ENCODE measurements at regions of chr1 and their contacts with region 1.

Region 1: DNA sequence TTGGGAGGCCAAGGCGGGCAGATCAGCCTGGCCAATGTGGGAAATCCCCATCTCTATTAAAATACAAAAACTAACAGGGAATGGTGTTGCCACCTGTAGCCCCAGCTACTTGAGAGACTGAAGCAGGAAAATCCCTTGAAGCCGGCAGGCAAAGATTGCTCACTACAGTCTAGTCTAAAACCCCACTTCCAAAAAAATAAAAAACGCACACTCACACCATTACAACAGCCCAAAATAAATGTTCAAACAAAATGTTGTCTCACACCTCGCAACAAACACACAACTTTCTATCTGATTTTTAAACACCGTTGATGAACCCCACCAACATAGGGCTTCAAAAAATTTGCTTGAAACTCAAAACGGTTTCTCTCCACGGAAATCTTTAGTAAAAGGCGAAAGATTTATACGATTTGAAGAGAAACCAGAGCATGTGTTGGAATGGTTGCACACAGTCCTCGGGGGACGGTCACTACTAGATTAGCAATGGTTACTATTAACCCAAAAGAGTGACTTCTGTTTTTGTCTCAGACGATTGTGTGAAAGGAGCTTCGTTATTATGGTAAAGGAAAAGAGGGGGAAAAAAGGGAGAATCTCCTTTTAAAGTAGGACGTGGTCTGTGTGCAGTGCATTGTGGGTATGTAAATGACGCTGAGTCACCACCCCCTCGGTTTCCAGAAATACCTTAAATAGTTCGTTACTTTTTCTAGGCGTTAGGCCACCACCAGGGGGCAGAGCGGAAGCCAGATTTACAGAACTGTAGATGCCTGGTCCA is at the start of gene RNU5D-1:
- DNase-seq: peak; percentile 96 to 98 (median 98)
- H3K4me3 ChIP-seq: peak within 1 kb of the TSS in 4 of 7 experiments; percentile 12 to 65 (median 48)
- H3K27ac ChIP-seq: peak within 1 kb of the TSS; percentile 99 to 100
- H3K4me1 ChIP-seq: peaks cover 8 to 42% (median 26%) of the 10 kb centered on the region in 4 experiments
- H3K27me3 ChIP-seq: no peaks in the 10 kb centered on the region

Region 2: DNA sequence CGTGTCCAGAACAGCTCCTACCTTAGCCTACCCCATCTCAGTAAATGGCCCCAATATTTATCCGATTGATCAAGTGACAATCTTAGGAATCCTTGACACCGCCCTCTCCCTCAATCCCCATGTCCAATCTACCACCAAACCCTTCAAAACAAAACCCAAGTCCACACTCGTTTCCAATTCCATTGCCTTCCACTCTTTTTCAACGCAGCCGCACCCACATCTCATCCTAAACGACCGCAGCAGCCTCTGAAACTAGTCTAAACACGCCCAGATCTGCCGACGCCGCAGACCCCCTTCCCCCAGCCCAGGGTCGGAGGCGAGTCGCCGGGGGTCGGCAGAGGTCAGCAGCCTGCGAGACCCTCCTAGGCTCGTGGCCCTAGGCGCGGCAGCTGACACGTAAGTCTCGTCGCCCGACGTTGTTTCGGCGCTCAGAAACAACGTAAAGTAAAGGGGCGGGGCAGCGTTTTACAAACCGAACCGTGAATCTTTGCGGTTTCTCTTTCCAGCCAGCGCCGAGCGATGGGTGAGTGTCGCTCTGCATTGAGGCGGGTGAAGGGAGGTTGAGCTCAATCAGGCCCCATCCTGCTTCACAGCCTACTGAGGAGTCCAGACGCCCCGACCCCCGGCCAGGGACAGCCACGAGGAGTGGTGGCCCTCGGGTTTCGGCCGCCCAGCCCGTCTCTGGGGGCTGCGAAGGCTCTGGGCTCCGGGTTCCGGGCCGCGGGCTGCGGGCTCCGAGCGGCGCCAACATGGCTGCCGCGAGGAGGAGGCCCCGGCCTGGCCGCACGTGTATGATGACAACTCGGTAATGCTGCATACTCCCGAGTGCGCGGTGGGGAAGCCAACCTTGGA is 44.4 kb after region 1 on chr1 and contains the start of gene RPS8:
- CTCF ChIA-PET with region 1: interaction called, 6 read pairs
- POLR2A ChIA-PET with region 1: interaction called, 20 read pairs
- DNase-seq: peak; percentile 94 to 96 (median 95)
- H3K4me3 ChIP-seq: peak within 1 kb of the TSS; percentile 68 to 93 (median 86)
- H3K27ac ChIP-seq: peak within 1 kb of the TSS; percentile 90 to 96
- H3K4me1 ChIP-seq: peaks cover 0 to 34% (median 29%) of the 10 kb centered on the region in 4 experiments
- H3K27me3 ChIP-seq: no peaks in the 10 kb centered on the region

Region 3: DNA sequence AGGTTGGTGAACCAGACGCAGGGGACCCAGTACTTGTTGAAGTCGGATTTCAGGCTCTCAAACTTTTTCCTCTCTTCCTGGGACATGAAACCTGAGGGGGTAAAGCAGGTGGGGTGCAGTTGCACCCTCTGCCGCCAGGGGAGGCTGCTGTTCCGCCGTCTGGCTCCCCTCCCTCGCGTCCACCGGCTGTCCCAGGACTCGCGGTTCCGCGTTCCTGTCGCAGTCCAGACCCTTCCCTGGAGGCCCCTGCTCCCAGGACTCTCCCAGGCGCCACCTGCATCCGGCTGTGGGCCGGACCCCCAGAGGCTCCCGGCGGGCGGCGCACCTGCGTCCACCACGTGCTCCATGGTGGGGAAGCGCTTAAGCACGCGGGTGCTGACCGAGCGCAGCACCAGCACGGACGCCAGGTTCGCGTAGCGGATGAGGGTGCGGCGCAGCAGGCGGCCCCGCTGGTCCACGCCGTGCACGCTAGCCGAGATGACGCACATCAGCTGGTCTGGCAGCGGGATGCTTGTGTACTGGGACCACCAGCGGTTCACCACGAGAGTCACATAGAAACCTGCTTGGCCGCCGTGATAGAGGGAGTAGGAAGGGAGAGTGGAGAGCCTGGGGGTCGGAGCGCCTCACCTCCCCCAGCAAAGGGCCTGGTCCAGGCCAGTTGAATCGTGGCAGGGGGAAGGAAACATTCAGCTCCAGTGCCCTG is 55.4 kb after region 1 on chr1:
- CTCF ChIA-PET with region 1: interaction called, 15 read pairs
- POLR2A ChIA-PET with region 1: interaction called, 3 read pairs
- DNase-seq: peak; percentile 76 to 85 (median 85)
- H3K4me3 ChIP-seq: peak overlapping the region in 6 of 7 experiments; percentile 23 to 76 (median 58)
- H3K27ac ChIP-seq: no peak overlapping the region
- H3K4me1 ChIP-seq: peaks cover 8 to 35% (median 30%) of the 10 kb centered on the region in 4 experiments
- H3K27me3 ChIP-seq: no peaks in the 10 kb centered on the region

Region 4: DNA sequence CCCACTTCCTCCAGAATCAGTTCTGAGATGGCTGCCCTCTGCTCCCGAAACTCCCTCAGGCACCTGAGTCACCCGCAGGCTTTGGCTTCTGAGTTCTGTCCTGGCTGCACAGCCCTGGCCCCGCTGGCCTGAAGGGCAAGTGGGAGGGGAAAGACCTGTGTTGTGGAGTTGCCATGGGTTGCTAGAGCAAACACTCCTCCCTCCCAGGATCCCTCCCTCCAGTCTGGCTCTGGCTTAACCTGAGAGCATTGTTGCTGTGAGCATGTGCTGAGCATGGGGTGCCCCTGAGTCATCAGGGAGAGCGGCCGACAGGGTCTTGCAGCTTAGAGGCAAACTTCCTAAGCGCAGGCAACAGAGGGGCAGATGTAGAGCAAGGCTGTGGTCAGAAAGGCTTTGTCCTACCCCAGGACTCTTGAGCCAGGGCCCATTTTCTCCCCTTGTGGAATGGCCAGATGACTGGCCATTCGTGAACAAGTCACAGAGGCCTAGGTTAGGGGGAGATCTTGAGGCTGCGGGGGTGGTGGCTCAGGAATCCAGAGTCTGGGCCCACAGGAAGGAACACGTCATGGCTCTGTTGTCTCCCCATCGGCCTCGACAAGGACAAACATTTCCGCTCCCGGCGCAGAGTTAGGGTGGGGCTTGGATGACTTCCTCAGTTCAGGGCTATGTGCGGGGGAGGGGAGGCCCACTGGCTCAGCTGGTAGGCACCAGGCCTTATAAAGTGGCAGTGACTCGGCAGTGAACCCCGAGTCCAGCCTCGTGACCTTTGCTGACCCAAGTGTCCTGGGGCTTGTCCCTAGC is 76.5 kb after region 1 on chr1 and contains the start of gene DYNLT4:
- CTCF ChIA-PET with region 1: interaction called, 10 read pairs
- POLR2A ChIA-PET with region 1: interaction called, 16 read pairs
- DNase-seq: peak; percentile 92 to 95 (median 95)
- H3K4me3 ChIP-seq: peak within 1 kb of the TSS in 3 of 7 experiments; percentile 34 to 54 (median 48)
- H3K27ac ChIP-seq: peak within 1 kb of the TSS; percentile 92 to 97
- H3K4me1 ChIP-seq: peaks cover 11 to 65% (median 62%) of the 10 kb centered on the region in 4 experiments
- H3K27me3 ChIP-seq: no peaks in the 10 kb centered on the region

Region 5: DNA sequence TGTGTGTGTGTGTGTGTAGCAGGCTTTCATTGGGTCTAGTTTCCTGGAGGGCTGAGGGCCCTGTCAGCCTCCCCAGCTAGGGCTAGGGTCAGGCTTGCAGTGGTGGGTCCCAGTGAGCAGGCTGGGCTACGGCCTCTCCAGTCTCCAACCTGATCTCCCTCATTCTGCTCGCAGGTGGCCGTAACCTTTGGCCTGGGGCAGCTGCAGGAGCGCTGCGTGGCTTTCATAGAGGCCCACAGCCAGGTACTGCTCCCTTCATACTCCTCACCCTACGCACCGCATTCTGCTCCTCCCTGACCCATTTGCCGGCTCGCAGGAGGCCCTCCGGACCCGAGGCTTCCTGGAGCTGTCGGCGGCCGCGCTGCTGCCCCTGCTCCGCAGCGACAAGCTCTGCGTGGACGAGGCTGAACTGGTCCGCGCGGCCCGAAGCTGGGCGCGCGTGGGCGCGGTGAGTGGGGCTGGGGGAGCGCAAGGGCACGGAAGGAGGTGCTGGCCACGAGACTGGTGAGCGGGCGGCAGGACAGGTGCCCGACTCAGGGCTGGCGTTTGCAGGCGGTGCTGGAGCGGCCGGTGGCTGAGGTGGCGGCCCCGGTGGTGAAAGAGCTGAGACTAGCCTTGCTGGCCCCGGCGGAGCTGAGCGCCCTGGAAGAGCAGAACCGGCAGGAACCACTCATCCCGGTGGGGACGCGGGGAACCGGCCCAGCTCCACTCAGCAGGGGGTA is 82.1 kb after region 1 on chr1:
- CTCF ChIA-PET with region 1: interaction called, 10 read pairs
- POLR2A ChIA-PET with region 1: interaction called, 25 read pairs
- DNase-seq: no peak
- H3K4me3 ChIP-seq: peak overlapping the region in 5 of 7 experiments; percentile 4 to 85 (median 67)
- H3K27ac ChIP-seq: no peak overlapping the region
- H3K4me1 ChIP-seq: peaks cover 11 to 63% (median 51%) of the 10 kb centered on the region in 4 experiments
- H3K27me3 ChIP-seq: no peaks in the 10 kb centered on the region

Region 6: GRCh38 chr1:44819608-44820327 is 88.8 kb after region 1 on chr1:
- CTCF ChIA-PET with region 1: interaction called, 9 read pairs
- POLR2A ChIA-PET with region 1: interaction called, 25 read pairs
- DNase-seq: peak; percentile 93 to 97 (median 94)
- H3K4me3 ChIP-seq: peak overlapping the region; percentile 52 to 93 (median 80)
- H3K27ac ChIP-seq: peak overlapping the region; percentile 100
- H3K4me1 ChIP-seq: peaks cover 0 to 35% (median 22%) of the 10 kb centered on the region in 4 experiments
- H3K27me3 ChIP-seq: no peaks in the 10 kb centered on the region